H1 (cell line): ENCODE measurements at regions of chr17 and their contacts with region 1.

Region 1: DNA sequence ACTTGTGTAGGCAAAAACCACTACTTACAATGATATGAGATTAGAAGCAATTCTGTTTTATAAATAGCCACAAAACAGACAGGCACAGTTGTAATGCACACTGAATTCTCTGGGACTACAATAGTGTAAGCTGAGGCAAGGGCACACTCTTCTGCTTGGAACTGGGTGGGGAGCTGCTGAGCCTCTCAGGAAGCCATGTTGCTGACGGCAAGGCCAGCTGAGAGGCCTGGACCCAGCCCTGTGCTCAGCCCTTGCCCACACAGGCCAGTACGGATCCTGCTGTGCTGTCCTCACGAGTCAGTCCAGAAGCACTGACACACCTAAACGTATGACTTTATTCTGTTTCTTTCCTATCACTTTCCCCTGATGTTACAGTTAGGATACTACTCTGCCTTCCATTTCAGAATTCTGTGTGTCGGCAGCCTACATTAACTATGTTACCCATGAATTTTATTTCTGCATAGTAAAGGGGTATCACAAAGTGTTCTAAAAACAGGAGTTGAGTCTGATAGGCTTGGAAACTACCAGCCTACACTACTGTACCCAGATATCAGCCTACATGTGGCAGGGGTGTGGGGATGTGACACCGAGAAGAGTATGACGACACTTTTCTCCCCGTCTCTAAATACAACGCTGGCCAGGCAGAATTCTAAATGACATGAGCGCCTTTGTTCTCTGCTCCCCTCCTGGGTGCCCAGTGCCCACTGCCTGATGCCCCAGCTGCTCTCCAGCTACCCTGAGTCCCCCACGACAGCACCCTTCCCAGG is 41.1 kb upstream of the FAAP100 start:
- DNase-seq: no peak
- H3K4me3 ChIP-seq: no peak overlapping the region
- H3K27ac ChIP-seq: no peak overlapping the region
- H3K4me1 ChIP-seq: no peaks in the 10 kb centered on the region
- H3K27me3 ChIP-seq: no peaks in the 10 kb centered on the region
- CTCF ChIP-seq: no peak
- EP300 ChIP-seq: no peak
- POLR2A ChIP-seq: no peak
- RAD21 ChIP-seq: no peak

Region 2: GRCh38 chr17:81579821-81580321 is 13.4 kb before region 1 on chr17:
- CTCF ChIA-PET with region 1: interaction called, 3 read pairs
- POLR2A ChIA-PET with region 1: interaction called, 14 read pairs
- DNase-seq: no peak
- H3K4me3 ChIP-seq: no peak overlapping the region
- H3K27ac ChIP-seq: no peak overlapping the region
- H3K4me1 ChIP-seq: no peaks in the 10 kb centered on the region
- H3K27me3 ChIP-seq: no peaks in the 10 kb centered on the region
- CTCF ChIP-seq: no peak
- EP300 ChIP-seq: no peak
- POLR2A ChIP-seq: no peak
- RAD21 ChIP-seq: no peak

Region 3: DNA sequence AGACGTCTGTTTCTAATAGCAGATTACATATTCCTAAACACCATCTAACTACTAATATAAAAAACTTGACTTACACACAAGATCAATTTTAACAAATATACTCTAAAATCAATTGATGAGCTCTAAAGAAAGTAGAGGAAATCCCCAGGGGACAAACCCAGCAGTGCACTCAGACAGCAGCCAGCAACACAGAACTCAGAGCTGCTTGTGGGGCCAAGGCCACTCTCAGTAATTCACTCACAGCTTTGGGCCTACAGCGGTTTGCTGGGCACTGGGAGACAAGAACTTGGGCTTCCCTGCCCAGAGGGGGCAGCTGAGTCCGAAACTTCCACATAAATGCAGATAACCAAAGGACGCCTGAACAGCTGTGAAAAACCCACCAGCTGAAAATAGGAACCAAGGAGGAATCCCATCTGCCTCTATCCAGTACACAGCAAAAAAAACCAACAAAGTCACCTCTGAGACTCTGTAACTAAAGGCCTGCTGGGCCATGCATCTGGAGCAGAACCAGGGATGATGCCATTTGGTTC is 22.2 kb after region 1 on chr17:
- CTCF ChIA-PET with region 1: no interaction called
- POLR2A ChIA-PET with region 1: no interaction called
- DNase-seq: no peak
- H3K4me3 ChIP-seq: no peak overlapping the region
- H3K27ac ChIP-seq: no peak overlapping the region
- H3K4me1 ChIP-seq: no peaks in the 10 kb centered on the region
- H3K27me3 ChIP-seq: no peaks in the 10 kb centered on the region
- CTCF ChIP-seq: no peak
- EP300 ChIP-seq: no peak
- POLR2A ChIP-seq: no peak
- RAD21 ChIP-seq: no peak